ENCODE measurements at regions of chr5 and their contacts with region 1.

Region 1: DNA sequence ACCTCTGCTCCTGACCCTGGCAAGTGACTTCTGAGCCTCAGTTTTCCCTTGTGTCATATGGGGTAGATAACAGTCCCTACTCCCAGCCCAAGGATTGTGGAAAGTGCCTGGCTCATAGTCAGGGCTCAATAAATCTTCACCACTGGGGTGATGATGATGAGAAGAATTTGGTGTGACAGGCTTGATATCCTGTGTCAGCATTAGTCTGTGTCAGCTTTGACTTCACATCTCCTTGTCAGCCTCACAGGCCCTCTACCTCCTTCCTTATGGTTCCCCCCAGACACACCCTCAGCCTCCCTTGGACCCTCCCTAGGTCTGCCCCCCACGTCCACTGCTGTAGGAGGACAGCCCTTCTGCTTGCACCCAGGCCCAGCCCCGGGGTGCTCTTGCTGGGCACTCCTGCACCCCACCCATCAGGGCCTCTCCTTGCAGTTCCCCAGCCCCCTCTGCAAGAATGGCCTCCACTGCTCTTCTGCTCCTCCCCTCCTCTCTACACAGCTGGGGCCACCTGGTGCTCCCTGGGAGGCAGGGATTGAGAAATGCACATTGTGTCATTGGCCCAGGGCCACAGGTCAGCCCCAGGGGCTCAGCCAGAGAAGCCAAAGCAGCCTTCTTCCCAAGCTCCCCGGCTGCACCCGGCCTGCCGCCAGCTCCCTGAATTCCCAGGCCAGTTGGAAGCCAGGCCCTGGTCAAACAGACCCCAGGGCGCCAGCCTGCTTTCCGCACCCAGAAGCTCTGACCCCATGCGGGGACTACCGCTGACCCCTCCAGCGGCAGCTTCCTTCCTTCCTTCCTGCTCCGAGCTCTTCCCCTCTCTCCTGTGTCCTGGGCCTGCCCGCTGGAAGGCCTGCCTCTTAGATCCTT is 7.7 kb downstream of the FGFR4 start:
- DNase-seq: no peak
- ATAC-seq: no peak
- H3K4me3 ChIP-seq: no peak overlapping the region
- H3K27ac ChIP-seq: no peak overlapping the region
- H3K4me1 ChIP-seq: peaks cover 0 to 53% of the 10 kb centered on the region in 2 experiments; a peak in 2 of 5 replicates
- H3K27me3 ChIP-seq: no peaks in the 10 kb centered on the region
- CTCF ChIP-seq: no peak
- EP300 ChIP-seq: no peak
- POLR2A ChIP-seq: no peak
- RAD21 ChIP-seq: no peak

Region 2: DNA sequence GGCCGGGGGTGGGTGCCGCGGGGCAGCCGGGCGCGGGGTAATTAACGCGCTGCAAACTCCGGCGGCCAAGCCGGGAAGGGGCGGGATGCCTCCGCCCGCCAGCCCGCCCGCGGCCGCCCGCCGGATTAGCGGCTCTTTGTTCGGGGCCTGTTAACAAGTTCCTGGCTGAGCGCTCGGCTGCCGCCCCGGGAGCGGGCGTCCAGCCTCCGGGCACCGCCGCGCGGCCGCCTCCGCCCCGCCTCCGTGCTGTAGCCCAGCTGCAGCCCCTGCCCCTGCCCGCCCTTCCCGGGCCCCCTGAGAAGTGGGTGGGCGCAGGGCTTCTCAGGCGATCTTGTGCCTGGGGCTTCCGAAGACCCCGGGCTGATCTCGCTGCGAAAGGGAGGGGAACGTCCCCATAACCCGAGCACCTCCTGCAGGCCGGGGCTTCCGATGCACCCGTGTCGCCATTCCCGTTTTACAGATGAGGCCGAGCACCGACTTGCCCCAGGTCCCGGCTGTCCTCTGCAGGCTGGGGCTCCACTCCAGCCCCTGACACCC is 276.5 kb before region 1 on chr5:
- CTCF ChIA-PET with region 1: no interaction called
- POLR2A ChIA-PET with region 1: no interaction called
- in situ Hi-C with region 1: no loop called
- intact Hi-C with region 1: loop called (anchors 5 kb)
- DNase-seq: peak; percentile 21 to 59 (median 56)
- ATAC-seq: peak; percentile 63; the same call in 2 of the 3 replicates
- H3K4me3 ChIP-seq: no peak overlapping the region
- H3K27ac ChIP-seq: no peak overlapping the region
- H3K4me1 ChIP-seq: peaks cover 0 to 19% of the 10 kb centered on the region in 2 experiments; a peak in 2 of 5 replicates
- H3K27me3 ChIP-seq: peaks cover 34 to 86% of the 10 kb centered on the region in 2 experiments
- CTCF ChIP-seq: peak; percentile 41 to 42 (median 41); a peak in 5 of 6 replicates
- EP300 ChIP-seq: no peak
- POLR2A ChIP-seq: no peak
- RAD21 ChIP-seq: no peak; a peak in 1 of 4 replicates

Region 3: GRCh38 chr5:177077335-177077734 is 17.1 kb before region 1 on chr5:
- CTCF ChIA-PET with region 1: no interaction called
- POLR2A ChIA-PET with region 1: no interaction called
- in situ Hi-C with region 1: no loop called
- intact Hi-C with region 1: no loop called
- DNase-seq: no peak
- ATAC-seq: peak; percentile 75
- H3K4me3 ChIP-seq: no peak overlapping the region
- H3K27ac ChIP-seq: no peak overlapping the region
- H3K4me1 ChIP-seq: peaks cover 0 to 5% of the 10 kb centered on the region in 2 experiments; a peak in 2 of 5 replicates
- H3K27me3 ChIP-seq: no peaks in the 10 kb centered on the region
- CTCF ChIP-seq: no peak
- EP300 ChIP-seq: no peak
- POLR2A ChIP-seq: no peak
- RAD21 ChIP-seq: no peak

Measured in K562 (cell line).